Activated B cell treated with CpG ODN at 0.5 μM for 24 hours (primary cell): ENCODE measurements at regions of chr6 and their contacts with region 1.

Region 1: DNA sequence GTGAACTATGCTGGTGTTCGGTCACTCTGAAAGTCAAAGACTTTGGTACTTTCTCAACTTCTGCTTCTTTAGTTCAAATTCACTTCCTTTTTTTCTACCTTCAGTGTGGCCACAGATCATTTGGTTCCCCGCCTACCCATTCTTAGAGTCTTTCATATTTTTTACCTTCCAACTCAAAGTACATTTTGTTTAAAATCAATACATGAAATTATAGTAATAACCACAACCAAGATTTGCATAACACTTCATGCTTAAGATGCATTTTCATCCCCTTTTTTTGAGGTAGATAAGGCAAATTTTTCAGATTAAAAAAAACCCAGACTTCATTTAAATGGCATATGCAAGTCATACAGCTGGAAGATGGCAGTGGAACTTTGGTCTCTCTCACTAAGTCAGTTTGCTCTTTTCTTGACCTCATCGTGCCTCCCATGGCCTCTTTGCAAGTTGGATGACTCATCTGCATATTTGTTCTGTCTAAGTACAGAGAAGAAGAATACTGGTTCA is 11.9 kb upstream of the CNR1 start:
- DNase-seq: no peak
- ATAC-seq: peak; percentile 75
- H3K4me3 Mint-ChIP-seq: peak overlapping the region; percentile 36
- H3K27ac Mint-ChIP-seq: peak overlapping the region; percentile 77
- H3K4me1 Mint-ChIP-seq: peaks cover 54% of the 10 kb centered on the region
- H3K27me3 Mint-ChIP-seq: no peaks in the 10 kb centered on the region
- CTCF ChIP-seq: no peak

Region 2: GRCh38 chr6:87407901-87408720 is 769.9 kb before region 1 on chr6 and contains the start of gene CFAP206:
- CTCF ChIA-PET with region 1: no interaction called
- POLR2A ChIA-PET with region 1: no interaction called
- intact Hi-C with region 1: loop called (anchors 5 kb)
- DNase-seq: peak; percentile 80
- ATAC-seq: peak; percentile 80
- H3K4me3 Mint-ChIP-seq: peak within 1 kb of the TSS; percentile 87
- H3K27ac Mint-ChIP-seq: peak within 1 kb of the TSS; percentile 79
- H3K4me1 Mint-ChIP-seq: peaks cover 9% of the 10 kb centered on the region
- H3K27me3 Mint-ChIP-seq: peaks cover 8% of the 10 kb centered on the region
- CTCF ChIP-seq: no peak
- total RNA-seq, gene CFAP206: 0.09 TPM in 1 of 2 replicates, not detected in the other

Region 3: DNA sequence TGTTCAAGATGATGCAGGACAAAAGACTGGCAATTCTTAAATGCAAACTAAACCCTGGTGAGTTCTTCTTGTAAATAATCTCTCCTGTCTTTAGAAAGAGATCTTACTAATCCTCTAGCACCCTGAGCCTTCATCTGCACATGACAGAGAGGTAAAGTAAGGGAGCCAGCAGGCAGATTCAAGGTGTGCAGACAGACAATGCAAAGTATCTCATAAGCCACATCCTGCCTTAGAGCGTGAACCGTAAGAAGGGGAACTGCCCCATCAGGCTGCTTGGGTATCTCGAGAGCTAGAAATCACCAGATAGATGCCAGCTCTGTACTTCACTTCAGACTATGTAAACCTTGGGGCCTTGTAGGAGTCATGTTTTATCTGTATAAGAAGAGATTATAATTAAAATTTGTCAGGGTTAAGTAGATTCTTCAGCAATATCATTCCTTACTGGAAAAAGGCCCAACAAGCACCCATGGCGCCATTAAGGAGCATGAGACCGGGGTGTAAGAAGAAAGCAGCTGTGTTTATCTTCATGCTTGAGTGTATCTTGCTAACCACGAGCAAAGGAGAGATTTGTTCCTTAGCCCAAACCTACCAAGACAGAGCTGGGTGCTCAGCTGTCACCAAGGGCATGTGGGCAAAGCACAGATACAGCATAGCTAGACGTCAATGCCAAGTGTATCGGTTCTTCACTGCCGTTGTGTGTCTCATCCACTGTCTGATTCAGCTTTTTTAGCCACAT is 36.3 kb before region 1 on chr6:
- CTCF ChIA-PET with region 1: interaction called, 4 read pairs
- POLR2A ChIA-PET with region 1: interaction called, 12 read pairs
- intact Hi-C with region 1: loop called (anchors 1 kb)
- DNase-seq: peak; percentile 33
- ATAC-seq: peak; percentile 91
- H3K4me3 Mint-ChIP-seq: peak overlapping the region; percentile 73
- H3K27ac Mint-ChIP-seq: peak overlapping the region; percentile 96
- H3K4me1 Mint-ChIP-seq: peaks cover 65% of the 10 kb centered on the region
- H3K27me3 Mint-ChIP-seq: no peaks in the 10 kb centered on the region
- CTCF ChIP-seq: no peak

Region 4: DNA sequence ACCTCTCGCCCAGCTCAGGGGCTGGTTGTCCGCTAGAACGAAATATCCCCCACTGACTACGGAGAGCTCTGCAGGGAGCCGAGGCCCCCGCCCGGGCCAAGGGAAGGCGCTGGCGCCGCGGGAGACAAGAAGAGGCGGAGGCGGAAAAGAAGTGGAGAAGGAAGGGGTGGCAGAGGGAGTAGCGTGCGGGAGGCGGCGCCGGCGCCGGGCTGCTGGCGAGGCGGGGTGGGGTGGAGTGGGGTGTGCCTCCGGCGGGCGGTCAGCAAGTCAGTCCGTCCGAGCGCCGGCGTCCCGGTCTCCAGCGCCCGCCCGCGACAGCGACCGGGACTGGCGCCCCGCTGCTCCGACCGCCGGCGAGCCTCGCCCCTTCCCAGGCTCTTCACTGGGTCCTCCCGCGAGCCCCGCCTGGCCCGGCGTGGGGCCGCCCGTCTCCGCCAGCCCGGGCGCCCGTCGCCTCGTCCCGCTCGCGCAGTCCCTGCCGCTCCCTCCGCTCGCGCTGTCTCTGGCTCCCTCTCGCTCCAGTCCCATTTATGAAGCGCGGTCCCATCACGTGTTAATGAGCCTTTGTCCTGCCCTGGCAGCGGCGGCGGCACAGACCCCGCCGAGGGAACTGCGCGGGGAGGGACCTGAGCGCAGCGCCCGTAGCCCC is 12.0 kb before region 1 on chr6 and contains the start of gene CNR1:
- CTCF ChIA-PET with region 1: no interaction called
- POLR2A ChIA-PET with region 1: interaction called, 7 read pairs
- intact Hi-C with region 1: loop called (anchors 1 kb)
- DNase-seq: no peak
- ATAC-seq: peak; percentile 59
- H3K4me3 Mint-ChIP-seq: peak within 1 kb of the TSS; percentile 91
- H3K27ac Mint-ChIP-seq: peak within 1 kb of the TSS; percentile 87
- H3K4me1 Mint-ChIP-seq: peaks cover 34% of the 10 kb centered on the region
- H3K27me3 Mint-ChIP-seq: peaks cover 15% of the 10 kb centered on the region
- CTCF ChIP-seq: no peak
- total RNA-seq, gene CNR1: 2.7 and 4.4 TPM in 2 replicates

Region 5: GRCh38 chr6:88616380-88616779 is 438.4 kb after region 1 on chr6:
- CTCF ChIA-PET with region 1: no interaction called
- POLR2A ChIA-PET with region 1: no interaction called
- intact Hi-C with region 1: loop called (anchors 10 kb)
- DNase-seq: no peak
- ATAC-seq: peak; percentile 43
- H3K4me3 Mint-ChIP-seq: peak overlapping the region; percentile 0
- H3K27ac Mint-ChIP-seq: peak overlapping the region; percentile 79
- H3K4me1 Mint-ChIP-seq: peaks cover 68% of the 10 kb centered on the region
- H3K27me3 Mint-ChIP-seq: no peaks in the 10 kb centered on the region
- CTCF ChIP-seq: no peak

Region 6: DNA sequence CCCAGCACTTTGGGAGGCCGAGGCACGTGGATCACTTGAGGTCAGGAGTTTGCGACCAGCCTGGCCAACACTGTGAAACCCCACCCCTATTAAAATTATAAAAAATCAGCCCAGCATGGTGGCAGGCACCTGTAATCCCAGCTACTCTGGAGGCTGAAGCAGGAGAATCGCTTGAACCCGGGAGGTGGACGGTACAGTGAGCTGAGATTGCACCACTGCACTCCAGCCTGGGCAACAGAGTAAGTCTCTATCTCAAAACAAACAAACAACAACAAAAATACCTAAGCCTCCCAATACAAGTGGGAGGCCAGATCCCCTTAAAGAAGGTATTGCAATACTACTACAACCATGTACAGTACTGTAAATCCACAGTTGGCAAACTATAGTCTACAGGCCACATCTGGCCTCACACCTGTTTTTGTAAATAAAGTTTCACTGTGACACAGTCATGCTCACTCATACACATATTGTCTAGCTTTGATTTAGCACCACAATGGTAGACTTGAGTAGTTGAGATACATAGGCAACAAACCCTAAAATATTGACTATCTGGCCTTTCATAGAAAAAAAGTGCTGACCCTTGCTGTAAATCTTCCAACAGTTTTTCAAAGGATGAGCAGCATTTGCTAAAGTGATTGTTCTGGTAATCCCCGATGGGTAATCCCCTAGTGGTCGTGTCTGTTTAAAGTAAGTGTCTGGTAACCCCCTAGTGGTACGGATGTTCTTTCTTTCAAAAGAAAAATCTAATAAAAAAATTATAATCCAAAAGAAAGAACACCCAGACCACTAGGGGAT is 583.4 kb after region 1 on chr6:
- CTCF ChIA-PET with region 1: no interaction called
- POLR2A ChIA-PET with region 1: no interaction called
- intact Hi-C with region 1: loop called (anchors 5 kb)
- DNase-seq: no peak
- ATAC-seq: peak; percentile 84
- H3K4me3 Mint-ChIP-seq: peak overlapping the region; percentile 19
- H3K27ac Mint-ChIP-seq: peak overlapping the region; percentile 75
- H3K4me1 Mint-ChIP-seq: peaks cover 33% of the 10 kb centered on the region
- H3K27me3 Mint-ChIP-seq: no peaks in the 10 kb centered on the region
- CTCF ChIP-seq: no peak